ENCODE measurements at regions of chr20 and their contacts with region 1.

Region 1: DNA sequence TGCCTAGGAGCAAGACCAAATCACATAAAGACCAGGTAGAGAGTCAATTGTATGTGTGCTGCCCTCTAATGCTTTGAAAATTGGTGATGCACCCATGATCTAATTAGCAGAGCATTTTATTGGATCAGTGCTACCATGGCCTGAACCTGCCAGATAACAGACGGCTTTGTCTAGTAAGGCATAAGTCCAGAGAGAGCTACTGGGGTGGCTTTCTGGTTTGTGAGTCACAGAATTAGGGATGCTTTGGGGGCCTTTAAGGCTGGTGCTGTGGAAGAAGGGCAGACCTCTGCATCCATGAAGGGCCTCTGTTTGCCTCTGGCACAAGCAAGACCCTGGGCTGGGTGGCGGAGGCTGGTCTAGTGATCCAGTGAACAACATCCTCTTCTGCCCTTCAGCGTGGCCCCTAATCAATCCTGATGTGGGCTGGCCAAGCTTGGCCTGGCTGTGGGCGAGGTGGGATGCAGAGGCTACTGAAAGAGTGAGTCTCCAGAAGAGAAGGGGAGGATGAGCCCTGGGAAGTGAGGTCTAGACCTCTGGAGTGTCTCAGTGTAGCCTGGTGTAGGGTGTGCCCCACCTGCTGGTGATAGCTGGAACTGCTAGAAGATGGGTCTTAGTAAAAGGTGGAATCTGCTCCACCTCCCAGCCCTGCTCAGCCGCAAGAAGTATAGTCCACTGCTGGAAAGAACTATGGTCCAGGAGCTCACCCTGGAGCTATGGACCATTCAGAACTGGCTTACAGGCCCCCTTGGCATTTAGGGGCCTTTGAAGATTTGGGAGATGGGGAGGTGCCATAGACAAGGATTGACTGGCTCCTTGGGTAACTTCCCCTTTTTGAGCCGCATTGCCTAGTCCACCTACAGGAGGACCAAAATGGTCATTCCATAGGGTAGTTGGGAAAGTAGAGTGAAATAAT is 36.7 kb upstream of the AAR2 start:
- DNase-seq: peak; percentile 80
- ATAC-seq: peak; percentile 81
- H3K4me3 ChIP-seq: no peak overlapping the region
- H3K4me3 Mint-ChIP-seq: no peak overlapping the region
- H3K27ac ChIP-seq: no peak overlapping the region
- H3K27ac Mint-ChIP-seq: no peak overlapping the region
- H3K4me1 ChIP-seq: peaks cover 3 to 7% of the 10 kb centered on the region in 2 donors
- H3K4me1 Mint-ChIP-seq: peaks cover 7% of the 10 kb centered on the region
- H3K27me3 ChIP-seq: peaks cover 0 to 5% (median 2%) of the 10 kb centered on the region in 4 experiments
- H3K27me3 Mint-ChIP-seq: peaks cover 26% of the 10 kb centered on the region
- CTCF ChIP-seq: peak; percentile 94

Region 2: GRCh38 chr20:36184816-36185776 is 14.5 kb before region 1 on chr20:
- CTCF ChIA-PET with region 1: interaction called, 10 read pairs
- POLR2A ChIA-PET with region 1: no interaction called
- intact Hi-C with region 1: no loop called
- DNase-seq: no peak
- ATAC-seq: no peak
- H3K4me3 ChIP-seq: no peak overlapping the region
- H3K4me3 Mint-ChIP-seq: no peak overlapping the region
- H3K27ac ChIP-seq: no peak overlapping the region
- H3K27ac Mint-ChIP-seq: no peak overlapping the region
- H3K4me1 ChIP-seq: no peaks in the 10 kb centered on the region
- H3K4me1 Mint-ChIP-seq: no peaks in the 10 kb centered on the region
- H3K27me3 ChIP-seq: no peaks in the 10 kb centered on the region
- H3K27me3 Mint-ChIP-seq: no peaks in the 10 kb centered on the region
- CTCF ChIP-seq: no peak

Region 3: DNA sequence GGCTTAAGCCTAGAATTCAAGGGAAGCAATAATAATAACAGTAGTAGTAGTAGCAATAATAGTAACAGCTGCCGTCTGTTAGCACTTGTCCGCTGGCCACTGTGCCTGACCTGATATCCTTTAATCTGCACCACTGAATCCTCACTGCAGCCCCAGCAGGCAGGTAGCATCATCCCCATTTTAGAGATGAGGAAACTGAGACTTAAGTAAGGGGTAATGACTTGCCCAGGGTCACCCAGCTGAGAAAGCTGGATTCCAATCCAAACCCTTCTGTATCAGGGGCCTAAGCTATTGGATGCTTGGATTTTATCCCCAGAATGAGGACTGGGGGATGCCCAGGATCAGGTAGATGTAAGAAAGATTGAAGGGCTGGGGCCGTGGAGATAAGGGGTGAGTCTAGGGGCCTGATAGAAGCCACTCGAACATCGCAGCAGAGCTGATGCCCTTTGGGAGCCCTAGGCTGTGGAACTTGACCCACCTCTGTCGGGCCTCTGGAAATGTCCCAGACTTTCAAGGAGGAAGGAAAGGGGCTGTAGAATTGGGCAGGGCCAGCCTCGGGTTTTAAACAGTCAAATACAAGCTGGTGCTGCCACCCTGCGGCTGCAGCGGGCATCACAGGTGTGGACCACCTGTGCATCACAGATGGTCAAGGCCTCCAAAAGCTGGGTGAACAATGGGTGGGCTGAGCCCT is 239.6 kb after region 1 on chr20:
- CTCF ChIA-PET with region 1: interaction called, 28 read pairs
- POLR2A ChIA-PET with region 1: no interaction called
- intact Hi-C with region 1: no loop called
- DNase-seq: peak; percentile 68
- ATAC-seq: peak; percentile 32
- H3K4me3 ChIP-seq: no peak overlapping the region
- H3K4me3 Mint-ChIP-seq: no peak overlapping the region
- H3K27ac ChIP-seq: no peak overlapping the region
- H3K27ac Mint-ChIP-seq: no peak overlapping the region
- H3K4me1 ChIP-seq: peaks cover 0 to 11% of the 10 kb centered on the region in 2 donors
- H3K4me1 Mint-ChIP-seq: peaks cover 9% of the 10 kb centered on the region
- H3K27me3 ChIP-seq: peaks cover 0 to 12% (median 0%) of the 10 kb centered on the region in 4 experiments
- H3K27me3 Mint-ChIP-seq: peaks cover 4% of the 10 kb centered on the region
- CTCF ChIP-seq: peak; percentile 84

Region 4: DNA sequence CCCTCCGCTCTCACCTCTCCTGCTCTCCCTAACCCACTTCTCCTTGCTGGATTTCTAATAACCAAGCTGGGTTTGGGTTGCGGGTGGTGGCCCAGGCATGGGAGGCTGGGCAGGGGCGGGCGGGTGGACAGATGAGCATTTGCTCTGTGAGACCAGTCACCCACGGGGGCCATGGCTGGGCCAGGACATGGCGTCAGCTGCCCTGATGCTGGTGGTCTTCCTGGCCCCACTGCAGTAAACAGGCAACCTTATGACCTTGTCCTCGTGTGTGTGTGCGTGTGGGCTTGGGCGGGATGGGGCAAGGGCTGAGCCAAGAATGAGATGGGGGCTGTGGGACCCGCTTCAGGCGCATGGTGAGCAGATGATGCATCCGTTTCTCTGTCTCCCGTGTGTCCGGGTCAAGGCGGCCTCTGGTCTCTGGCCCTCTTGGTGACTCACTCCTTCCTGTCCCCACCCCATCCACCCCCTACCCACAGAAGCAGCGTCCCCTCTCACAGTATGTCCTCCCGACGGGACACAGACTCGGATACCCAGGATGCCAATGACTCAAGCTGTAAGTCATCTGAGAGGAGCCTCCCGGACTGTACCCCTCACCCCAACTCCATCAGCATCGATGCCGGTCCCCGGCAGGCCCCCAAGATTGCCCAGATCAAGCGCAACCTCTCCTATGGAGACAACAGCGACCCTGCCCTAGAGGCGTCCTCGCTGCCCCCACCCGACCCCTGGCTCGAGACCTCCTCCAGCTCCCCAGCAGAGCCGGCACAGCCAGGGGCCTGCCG is 300.3 kb after region 1 on chr20:
- CTCF ChIA-PET with region 1: no interaction called
- POLR2A ChIA-PET with region 1: no interaction called
- intact Hi-C with region 1: no loop called
- DNase-seq: no peak
- ATAC-seq: no peak
- H3K4me3 ChIP-seq: no peak overlapping the region
- H3K4me3 Mint-ChIP-seq: no peak overlapping the region
- H3K27ac ChIP-seq: no peak overlapping the region
- H3K27ac Mint-ChIP-seq: no peak overlapping the region
- H3K4me1 ChIP-seq: no peaks in the 10 kb centered on the region
- H3K4me1 Mint-ChIP-seq: peaks cover 5% of the 10 kb centered on the region
- H3K27me3 ChIP-seq: no peaks in the 10 kb centered on the region
- H3K27me3 Mint-ChIP-seq: no peaks in the 10 kb centered on the region
- CTCF ChIP-seq: no peak

Region 5: DNA sequence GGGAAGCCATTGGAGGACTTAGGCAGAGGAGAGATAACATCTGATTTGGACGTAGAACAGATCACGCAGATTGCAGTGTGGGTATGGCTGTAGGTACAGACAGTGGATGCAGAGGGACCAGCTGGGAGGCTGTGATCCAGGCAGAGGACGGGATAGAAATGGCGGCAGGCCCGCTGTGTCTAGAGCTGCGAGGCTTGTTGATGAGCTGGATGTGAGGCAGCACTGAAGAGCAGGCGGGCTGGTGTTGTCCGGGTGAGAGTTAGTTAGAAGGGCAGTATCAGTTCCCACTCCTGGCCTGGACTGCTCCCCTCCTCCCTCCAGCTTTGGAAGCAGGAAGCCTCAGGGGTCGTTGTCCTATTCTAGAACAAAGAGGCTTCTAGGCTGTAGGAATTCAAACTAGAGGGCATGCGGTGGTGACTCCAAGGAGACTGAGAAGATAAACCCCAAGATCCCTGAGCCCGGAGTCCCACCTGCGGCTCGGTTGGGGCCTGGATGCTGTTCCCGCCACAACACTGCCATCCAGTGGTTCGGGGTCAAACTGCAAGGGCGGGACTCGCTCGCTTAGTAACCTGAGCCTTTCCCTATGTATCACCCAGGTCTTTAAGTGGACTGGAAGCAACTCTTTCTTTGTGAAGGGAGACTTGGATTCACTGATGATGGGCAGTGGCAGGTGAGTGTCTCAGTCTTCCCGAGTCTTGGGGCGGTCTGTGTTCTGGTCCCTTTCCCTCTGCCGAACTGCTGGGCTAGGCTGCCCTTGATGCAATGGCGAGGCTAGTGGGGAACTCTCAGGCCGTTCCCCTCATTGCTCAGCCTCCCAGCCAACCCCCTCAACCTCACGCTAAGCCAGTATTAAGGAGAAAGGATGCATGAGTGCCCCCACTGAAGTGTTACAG is 687.5 kb after region 1 on chr20:
- CTCF ChIA-PET with region 1: interaction called, 6 read pairs
- POLR2A ChIA-PET with region 1: no interaction called
- intact Hi-C with region 1: loop called (anchors 1 kb)
- DNase-seq: peak; percentile 87
- ATAC-seq: peak; percentile 98
- H3K4me3 ChIP-seq: no peak overlapping the region
- H3K4me3 Mint-ChIP-seq: peak overlapping the region; percentile 61
- H3K27ac ChIP-seq: no peak overlapping the region
- H3K27ac Mint-ChIP-seq: no peak overlapping the region
- H3K4me1 ChIP-seq: peaks cover 4 to 8% of the 10 kb centered on the region in 2 donors
- H3K4me1 Mint-ChIP-seq: peaks cover 8% of the 10 kb centered on the region
- H3K27me3 ChIP-seq: no peaks in the 10 kb centered on the region
- H3K27me3 Mint-ChIP-seq: no peaks in the 10 kb centered on the region
- CTCF ChIP-seq: peak; percentile 97